Activated naive CD4-positive, alpha-beta T cell treated with anti-CD3 and anti-CD28 coated beads for 36 hours (primary cell): ENCODE measurements at regions of chr4 and their contacts with region 1.

Region 1: GRCh38 chr4:98928505-98929340 is at the start of gene EIF4E:
- DNase-seq: peak; percentile 98
- H3K4me3 Mint-ChIP-seq: peak within 1 kb of the TSS; percentile 87
- H3K27ac Mint-ChIP-seq: peak within 1 kb of the TSS; percentile 99
- H3K4me1 Mint-ChIP-seq: peaks cover 39% of the 10 kb centered on the region
- H3K27me3 Mint-ChIP-seq: no peaks in the 10 kb centered on the region
- total RNA-seq, gene EIF4E: 104 to 116 TPM

Region 2: DNA sequence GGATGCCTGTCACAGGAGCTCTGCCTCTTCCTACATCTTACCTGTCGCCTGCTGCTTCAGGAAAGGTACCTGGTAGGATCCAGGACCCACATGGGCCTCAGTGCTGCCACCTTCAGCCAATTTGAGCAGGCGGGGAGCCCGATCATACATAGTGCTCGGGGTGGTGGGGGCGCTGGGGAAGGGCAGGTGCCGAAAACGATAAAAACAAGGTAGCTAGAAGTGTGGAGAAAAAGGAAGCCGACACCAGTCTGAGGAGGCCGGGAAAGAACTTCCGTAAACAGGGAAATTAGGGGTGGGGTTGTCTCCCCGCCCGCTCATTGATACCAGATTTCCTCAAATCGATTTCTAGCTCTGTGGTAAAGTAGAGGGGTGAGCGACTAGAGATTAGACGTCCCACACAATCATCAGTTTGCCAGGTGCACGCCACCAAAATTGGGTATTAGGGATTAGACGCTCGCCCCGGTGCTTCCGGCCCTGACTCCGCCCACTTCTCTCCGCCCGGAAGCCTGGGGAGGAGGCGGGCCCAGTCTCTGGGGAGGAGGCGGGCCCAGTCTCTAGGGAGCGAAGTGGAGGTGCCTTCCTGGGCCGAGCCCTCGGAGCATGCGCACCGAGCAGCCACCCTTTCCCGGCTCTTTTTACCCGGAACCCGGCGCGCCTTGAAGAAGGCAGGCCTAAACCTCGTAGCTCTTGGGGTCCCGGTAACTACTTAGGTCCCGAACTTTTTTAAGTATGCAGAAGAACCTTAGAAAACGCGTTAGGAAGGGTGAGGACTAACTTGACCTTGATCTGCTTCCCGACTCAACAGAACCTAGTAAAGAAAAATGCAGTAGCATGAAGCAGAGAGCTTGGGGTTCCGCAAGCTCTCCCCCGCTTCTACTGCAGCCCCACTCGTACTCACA is 785.5 kb before region 1 on chr4 and contains the start of gene STPG2:
- CTCF ChIA-PET with region 1: no interaction called
- intact Hi-C with region 1: loop called (anchors 1 kb)
- DNase-seq: peak; percentile 95
- H3K4me3 Mint-ChIP-seq: peak within 1 kb of the TSS; percentile 96
- H3K27ac Mint-ChIP-seq: peak within 1 kb of the TSS; percentile 99
- H3K4me1 Mint-ChIP-seq: peaks cover 19% of the 10 kb centered on the region
- H3K27me3 Mint-ChIP-seq: no peaks in the 10 kb centered on the region
- total RNA-seq, gene STPG2: not detected

Region 3: DNA sequence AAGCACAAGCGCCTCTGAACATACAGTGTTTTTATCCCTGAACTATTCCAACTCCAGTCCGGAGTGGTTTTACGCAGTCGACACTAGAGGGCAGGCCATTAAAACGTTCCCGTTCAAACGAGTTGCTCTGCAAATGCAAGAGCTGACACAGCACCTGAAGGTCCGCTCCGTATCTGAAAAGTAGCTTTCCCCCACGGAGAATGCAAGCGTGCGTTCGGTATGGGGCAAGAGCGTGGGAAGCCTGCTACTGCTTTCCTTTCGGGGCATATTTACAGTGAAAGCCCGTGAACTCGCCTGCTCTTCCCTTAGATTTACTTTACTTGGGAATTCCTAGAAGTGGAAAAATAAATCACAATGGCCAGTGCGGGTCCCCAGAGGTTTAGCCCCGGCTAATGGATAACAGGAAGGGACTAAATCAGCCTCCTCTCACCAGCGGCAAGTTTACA is 461.1 kb before region 1 on chr4:
- CTCF ChIA-PET with region 1: interaction called, 3 read pairs
- intact Hi-C with region 1: loop called (anchors 2 kb)
- DNase-seq: peak; percentile 85
- H3K4me3 Mint-ChIP-seq: peak overlapping the region; percentile 65
- H3K27ac Mint-ChIP-seq: no peak overlapping the region
- H3K4me1 Mint-ChIP-seq: peaks cover 16% of the 10 kb centered on the region
- H3K27me3 Mint-ChIP-seq: no peaks in the 10 kb centered on the region

Region 4: GRCh38 chr4:98710831-98711230 is 217.9 kb before region 1 on chr4:
- CTCF ChIA-PET with region 1: no interaction called
- intact Hi-C with region 1: no loop called
- DNase-seq: no peak
- H3K4me3 Mint-ChIP-seq: no peak overlapping the region
- H3K27ac Mint-ChIP-seq: no peak overlapping the region
- H3K4me1 Mint-ChIP-seq: peaks cover 18% of the 10 kb centered on the region
- H3K27me3 Mint-ChIP-seq: no peaks in the 10 kb centered on the region

Region 5: GRCh38 chr4:98939892-98940298 is 11.2 kb after region 1 on chr4:
- CTCF ChIA-PET with region 1: interaction called, 5 read pairs
- intact Hi-C with region 1: loop called (anchors 1 kb)
- DNase-seq: no peak
- H3K4me3 Mint-ChIP-seq: no peak overlapping the region
- H3K27ac Mint-ChIP-seq: no peak overlapping the region
- H3K4me1 Mint-ChIP-seq: peaks cover 20% of the 10 kb centered on the region
- H3K27me3 Mint-ChIP-seq: no peaks in the 10 kb centered on the region

Region 6: DNA sequence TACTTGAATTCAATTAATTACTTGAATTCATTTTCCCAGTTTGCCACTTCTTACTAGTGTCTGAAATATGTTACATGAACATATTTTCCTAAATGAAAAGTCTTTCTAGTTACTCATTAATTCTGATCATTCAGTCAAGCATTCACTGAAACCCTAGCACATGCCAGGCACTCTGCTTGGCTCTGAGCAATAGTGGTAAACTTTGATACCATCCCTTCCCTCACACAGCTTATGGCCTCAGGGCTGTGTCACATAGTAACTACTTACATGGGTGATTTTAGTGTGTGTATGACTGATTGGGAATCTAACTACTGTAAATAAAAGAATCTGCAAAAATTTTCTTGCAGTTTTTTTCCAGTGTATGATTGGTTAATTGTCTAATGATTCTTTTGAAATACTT is 99.5 kb after region 1 on chr4:
- CTCF ChIA-PET with region 1: no interaction called
- intact Hi-C with region 1: no loop called
- DNase-seq: no peak
- H3K4me3 Mint-ChIP-seq: no peak overlapping the region
- H3K27ac Mint-ChIP-seq: no peak overlapping the region
- H3K4me1 Mint-ChIP-seq: peaks cover 61% of the 10 kb centered on the region
- H3K27me3 Mint-ChIP-seq: no peaks in the 10 kb centered on the region

Region 7: GRCh38 chr4:99131378-99131777 is 202.7 kb after region 1 on chr4:
- CTCF ChIA-PET with region 1: no interaction called
- intact Hi-C with region 1: no loop called
- DNase-seq: no peak
- H3K4me3 Mint-ChIP-seq: no peak overlapping the region
- H3K27ac Mint-ChIP-seq: no peak overlapping the region
- H3K4me1 Mint-ChIP-seq: no peaks in the 10 kb centered on the region
- H3K27me3 Mint-ChIP-seq: no peaks in the 10 kb centered on the region

Region 8: DNA sequence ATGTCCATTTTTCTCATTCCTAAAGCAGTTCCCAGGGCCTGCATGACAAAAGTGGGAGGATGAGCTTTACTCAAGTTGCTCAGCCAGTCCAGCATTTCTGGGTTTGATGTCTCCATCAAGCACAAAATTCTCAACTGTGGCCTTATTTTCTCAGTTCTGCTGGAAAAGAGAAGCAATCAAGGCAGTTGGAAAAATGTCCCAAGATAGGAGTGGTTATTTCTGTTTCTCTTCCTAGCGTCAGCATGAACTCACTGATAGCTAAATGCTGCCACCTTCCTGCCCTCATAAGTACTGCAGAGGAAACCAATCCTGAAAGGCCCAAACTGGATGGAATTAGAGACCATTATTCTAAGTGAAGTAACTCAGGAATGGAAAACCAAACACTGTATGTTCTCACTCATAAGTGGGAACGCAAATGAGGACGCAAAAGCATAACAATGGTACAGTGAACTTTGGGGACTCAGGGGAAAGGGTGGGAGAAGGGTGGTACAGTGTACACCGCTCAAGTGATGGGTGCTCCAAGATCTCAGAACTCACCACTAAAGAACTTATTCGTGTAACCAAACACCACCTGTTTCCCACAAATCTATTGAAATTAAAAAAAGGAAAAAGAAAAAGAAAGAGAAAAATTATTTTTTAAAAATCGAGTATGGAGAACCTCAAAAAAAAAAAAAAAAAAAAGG is 476.9 kb after region 1 on chr4:
- CTCF ChIA-PET with region 1: interaction called, 3 read pairs
- intact Hi-C with region 1: loop called (anchors 2 kb)
- DNase-seq: peak; percentile 77
- H3K4me3 Mint-ChIP-seq: no peak overlapping the region
- H3K27ac Mint-ChIP-seq: no peak overlapping the region
- H3K4me1 Mint-ChIP-seq: no peaks in the 10 kb centered on the region
- H3K27me3 Mint-ChIP-seq: no peaks in the 10 kb centered on the region

Region 9: DNA sequence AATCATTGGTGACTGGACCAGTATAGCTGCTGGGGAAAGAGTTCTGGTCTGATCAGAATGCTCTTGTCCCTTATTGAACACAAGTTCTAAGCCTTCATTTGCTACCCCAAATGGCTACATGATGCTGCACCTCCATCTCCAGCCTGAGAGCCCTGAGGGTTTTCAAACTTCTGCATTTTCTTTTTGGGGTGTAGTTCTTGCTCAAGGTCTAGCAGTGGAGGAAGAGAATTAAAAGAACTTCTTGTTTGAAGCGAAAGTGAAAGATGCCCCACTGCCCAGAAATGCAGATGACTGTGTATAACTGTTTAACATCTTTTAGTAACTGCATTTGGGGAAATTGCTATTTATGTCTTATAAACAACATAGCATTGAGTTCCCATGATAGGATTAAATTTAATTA is 927.0 kb after region 1 on chr4:
- CTCF ChIA-PET with region 1: no interaction called
- intact Hi-C with region 1: loop called (anchors 2 kb)
- DNase-seq: peak; percentile 43
- H3K4me3 Mint-ChIP-seq: no peak overlapping the region
- H3K27ac Mint-ChIP-seq: peak overlapping the region; percentile 74
- H3K4me1 Mint-ChIP-seq: peaks cover 66% of the 10 kb centered on the region
- H3K27me3 Mint-ChIP-seq: no peaks in the 10 kb centered on the region